Posterior vena cava (tissue), 2 donors: ENCODE measurements at regions of chr9 and their contacts with region 1.

Region 1: DNA sequence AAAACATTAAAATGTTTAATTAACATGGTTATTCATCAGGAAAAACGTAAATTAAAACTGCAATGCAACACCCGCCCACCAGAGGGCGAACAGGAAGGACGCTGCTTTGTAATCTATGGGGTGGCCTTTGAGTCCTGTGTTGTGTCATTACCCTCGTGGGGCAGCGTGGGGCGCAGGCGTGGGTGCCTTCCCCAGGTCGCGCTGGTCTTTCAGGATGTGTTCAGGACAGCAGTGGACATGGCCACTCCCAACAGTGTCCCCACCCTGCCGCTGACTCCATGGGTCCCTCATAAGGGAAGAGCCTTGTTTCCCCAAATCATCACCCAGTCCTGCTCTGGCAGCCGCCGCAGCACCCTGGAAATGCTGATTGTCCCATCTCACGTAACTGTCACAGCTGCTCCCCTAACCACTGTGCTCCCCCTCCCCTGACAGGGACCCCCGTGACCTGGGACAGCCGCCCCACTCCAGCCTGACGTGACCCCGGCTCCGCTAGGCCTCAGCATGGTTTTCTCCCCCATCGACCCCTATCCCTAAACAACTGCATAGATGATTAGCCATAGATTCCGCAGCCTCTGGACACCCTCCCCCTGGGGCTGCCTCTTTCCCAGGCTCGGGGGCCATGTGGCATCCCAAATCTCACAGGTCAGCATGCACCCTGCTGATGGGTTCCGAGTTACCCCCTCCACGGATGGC is 36.4 kb downstream of the GLT6D1 start:
- DNase-seq: peak; percentile 80

Region 2: GRCh38 chr9:136143216-136144001 is 540.5 kb after region 1 on chr9:
- intact Hi-C with region 1: loop called in 1 of 2 experiments (anchors 10 kb)
- DNase-seq: no peak